ENCODE measurements at regions of chr7 and their contacts with region 1.

Region 1: GRCh38 chr7:16645593-16646471 is at the starts of genes ANKMY2 and BZW2:
- DNase-seq: peak; percentile 84 to 97 (median 92)
- ATAC-seq: peak; percentile 83
- H3K4me3 ChIP-seq: peak within 1 kb of the TSS; percentile 96 to 99
- H3K4me3 Mint-ChIP-seq: peak within 1 kb of the TSS; percentile 99
- H3K27ac ChIP-seq: peak within 1 kb of the TSS; percentile 83 to 93
- H3K27ac Mint-ChIP-seq: peak within 1 kb of the TSS; percentile 99
- H3K4me1 ChIP-seq: peaks cover 42% of the 10 kb centered on the region
- H3K4me1 Mint-ChIP-seq: peaks cover 70% of the 10 kb centered on the region
- H3K27me3 ChIP-seq: no peaks in the 10 kb centered on the region
- H3K27me3 Mint-ChIP-seq: no peaks in the 10 kb centered on the region
- CTCF ChIP-seq: no peak
- total RNA-seq, gene ANKMY2: 3.9 TPM
- total RNA-seq, gene BZW2: 23.2 to 23.8 TPM

Region 2: GRCh38 chr7:16657656-16658279 is 11.9 kb after region 1 on chr7:
- CTCF ChIA-PET with region 1: no interaction called
- POLR2A ChIA-PET with region 1: interaction called, 7 read pairs
- intact Hi-C with region 1: loop called in 1 of 2 experiments (anchors 2 kb)
- DNase-seq: no peak
- ATAC-seq: no peak
- H3K4me3 ChIP-seq: no peak overlapping the region
- H3K4me3 Mint-ChIP-seq: no peak overlapping the region
- H3K27ac ChIP-seq: no peak overlapping the region
- H3K27ac Mint-ChIP-seq: no peak overlapping the region
- H3K4me1 ChIP-seq: peaks cover 3% of the 10 kb centered on the region
- H3K4me1 Mint-ChIP-seq: peaks cover 50% of the 10 kb centered on the region
- H3K27me3 ChIP-seq: no peaks in the 10 kb centered on the region
- H3K27me3 Mint-ChIP-seq: no peaks in the 10 kb centered on the region
- CTCF ChIP-seq: no peak

Region 3: DNA sequence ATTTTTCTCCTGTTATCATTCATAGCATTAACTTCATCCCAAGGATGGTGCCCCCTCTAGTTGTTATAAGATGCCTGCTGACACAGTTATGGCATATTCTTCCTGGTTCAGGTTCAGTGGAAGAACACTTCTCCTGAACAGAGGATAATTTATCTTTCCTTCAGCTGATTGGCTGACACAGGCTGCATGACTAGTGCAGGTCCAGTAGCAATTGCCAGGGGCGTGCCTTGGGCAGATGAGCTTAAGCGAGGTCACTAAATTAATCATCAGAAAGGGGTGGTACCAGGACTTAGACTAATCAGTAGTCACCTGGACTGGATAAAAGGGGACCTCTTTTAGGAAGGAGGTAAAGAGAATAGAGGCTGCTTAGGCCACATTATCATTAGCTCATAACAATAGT is 42.4 kb after region 1 on chr7:
- CTCF ChIA-PET with region 1: no interaction called
- POLR2A ChIA-PET with region 1: interaction called, 4 read pairs
- intact Hi-C with region 1: loop called in 1 of 2 experiments (anchors 5 kb)
- DNase-seq: no peak
- ATAC-seq: no peak
- H3K4me3 ChIP-seq: no peak overlapping the region
- H3K4me3 Mint-ChIP-seq: no peak overlapping the region
- H3K27ac ChIP-seq: no peak overlapping the region
- H3K27ac Mint-ChIP-seq: no peak overlapping the region
- H3K4me1 ChIP-seq: peaks cover 8% of the 10 kb centered on the region
- H3K4me1 Mint-ChIP-seq: peaks cover 22% of the 10 kb centered on the region
- H3K27me3 ChIP-seq: no peaks in the 10 kb centered on the region
- H3K27me3 Mint-ChIP-seq: no peaks in the 10 kb centered on the region
- CTCF ChIP-seq: no peak

Region 4: GRCh38 chr7:17234398-17235031 is 588.7 kb after region 1 on chr7:
- CTCF ChIA-PET with region 1: no interaction called
- POLR2A ChIA-PET with region 1: no interaction called
- intact Hi-C with region 1: loop called (anchors 2 to 5 kb)
- DNase-seq: peak; percentile 22 to 93 (median 59)
- ATAC-seq: peak; percentile 81
- H3K4me3 ChIP-seq: peak overlapping the region; percentile 11 to 19
- H3K4me3 Mint-ChIP-seq: peak overlapping the region; percentile 67
- H3K27ac ChIP-seq: peak overlapping the region; percentile 62 to 93
- H3K27ac Mint-ChIP-seq: peak overlapping the region; percentile 96
- H3K4me1 ChIP-seq: peaks cover 24% of the 10 kb centered on the region
- H3K4me1 Mint-ChIP-seq: peaks cover 28% of the 10 kb centered on the region
- H3K27me3 ChIP-seq: no peaks in the 10 kb centered on the region
- H3K27me3 Mint-ChIP-seq: no peaks in the 10 kb centered on the region
- CTCF ChIP-seq: no peak

Measured in CD8-positive, alpha-beta T cell (primary cell).